ENCODE measurements at regions of chr1 and their contacts with region 1.

Region 1: GRCh38 chr1:93661829-93662474 is 19.7 kb downstream of the BCAR3 start:
- DNase-seq: no peak
- ATAC-seq: no peak
- H3K4me3 Mint-ChIP-seq: no peak overlapping the region
- H3K27ac Mint-ChIP-seq: no peak overlapping the region
- H3K4me1 Mint-ChIP-seq: peaks cover 28% of the 10 kb centered on the region
- H3K27me3 Mint-ChIP-seq: no peaks in the 10 kb centered on the region
- CTCF ChIP-seq: no peak

Region 2: DNA sequence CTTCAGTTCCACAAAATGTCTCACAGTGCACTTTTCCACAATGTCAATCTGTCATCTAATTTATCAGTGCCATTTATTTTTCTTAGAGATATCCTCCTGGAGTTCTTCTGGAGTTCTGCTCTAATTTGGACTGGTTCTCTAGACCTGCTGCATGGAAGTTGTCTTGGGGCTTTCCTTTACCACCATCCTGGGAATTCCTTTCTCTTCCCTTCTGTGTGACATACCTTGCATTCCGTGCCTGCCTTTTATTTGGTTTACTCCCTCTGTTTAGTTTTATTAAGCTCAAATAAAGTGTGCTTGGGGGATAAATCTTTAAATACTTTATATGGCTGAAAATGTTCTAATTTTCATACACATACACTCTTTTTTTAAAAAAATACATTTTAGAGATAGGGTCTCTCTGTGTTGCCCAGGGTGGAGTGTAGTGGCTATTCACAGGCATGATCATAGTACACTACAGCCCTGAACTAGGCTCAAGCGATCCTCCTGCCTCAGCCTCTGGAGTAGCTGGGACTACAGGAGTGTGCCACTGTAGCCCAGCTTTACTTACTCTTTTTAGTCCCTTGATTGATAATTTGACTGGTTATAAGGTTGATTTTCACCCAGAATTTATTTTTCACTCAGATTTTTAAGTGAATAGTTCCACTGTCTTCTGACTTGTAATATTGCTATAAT is 568.5 kb before region 1 on chr1:
- CTCF ChIA-PET with region 1: no interaction called
- POLR2A ChIA-PET with region 1: no interaction called
- intact Hi-C with region 1: no loop called
- DNase-seq: no peak
- ATAC-seq: no peak
- H3K4me3 Mint-ChIP-seq: no peak overlapping the region
- H3K27ac Mint-ChIP-seq: peak overlapping the region; percentile 16
- H3K4me1 Mint-ChIP-seq: peaks cover 60% of the 10 kb centered on the region
- H3K27me3 Mint-ChIP-seq: no peaks in the 10 kb centered on the region
- CTCF ChIP-seq: no peak

Region 3: DNA sequence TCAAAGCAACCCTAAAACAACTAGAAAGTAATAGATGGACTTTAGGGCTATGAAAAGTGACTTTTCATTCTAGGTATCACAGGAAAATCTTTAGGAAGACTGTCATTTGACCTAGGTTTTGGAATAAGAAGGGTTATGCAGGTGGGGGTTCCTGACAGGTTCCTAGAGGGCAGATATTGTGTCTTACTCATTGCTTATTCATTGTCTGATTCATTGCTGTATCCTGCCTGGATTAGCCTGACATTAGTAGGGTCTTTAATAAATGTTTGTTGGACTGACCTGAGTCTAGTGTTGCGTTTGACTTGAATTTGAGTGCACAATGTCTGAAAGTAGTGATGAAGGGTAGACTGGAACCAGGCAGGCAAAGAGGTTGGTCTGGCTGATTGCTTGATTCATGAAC is 208.0 kb before region 1 on chr1:
- CTCF ChIA-PET with region 1: no interaction called
- POLR2A ChIA-PET with region 1: no interaction called
- intact Hi-C with region 1: no loop called
- DNase-seq: no peak
- ATAC-seq: no peak
- H3K4me3 Mint-ChIP-seq: no peak overlapping the region
- H3K27ac Mint-ChIP-seq: no peak overlapping the region
- H3K4me1 Mint-ChIP-seq: peaks cover 15% of the 10 kb centered on the region
- H3K27me3 Mint-ChIP-seq: peaks cover 15% of the 10 kb centered on the region
- CTCF ChIP-seq: no peak

Region 4: DNA sequence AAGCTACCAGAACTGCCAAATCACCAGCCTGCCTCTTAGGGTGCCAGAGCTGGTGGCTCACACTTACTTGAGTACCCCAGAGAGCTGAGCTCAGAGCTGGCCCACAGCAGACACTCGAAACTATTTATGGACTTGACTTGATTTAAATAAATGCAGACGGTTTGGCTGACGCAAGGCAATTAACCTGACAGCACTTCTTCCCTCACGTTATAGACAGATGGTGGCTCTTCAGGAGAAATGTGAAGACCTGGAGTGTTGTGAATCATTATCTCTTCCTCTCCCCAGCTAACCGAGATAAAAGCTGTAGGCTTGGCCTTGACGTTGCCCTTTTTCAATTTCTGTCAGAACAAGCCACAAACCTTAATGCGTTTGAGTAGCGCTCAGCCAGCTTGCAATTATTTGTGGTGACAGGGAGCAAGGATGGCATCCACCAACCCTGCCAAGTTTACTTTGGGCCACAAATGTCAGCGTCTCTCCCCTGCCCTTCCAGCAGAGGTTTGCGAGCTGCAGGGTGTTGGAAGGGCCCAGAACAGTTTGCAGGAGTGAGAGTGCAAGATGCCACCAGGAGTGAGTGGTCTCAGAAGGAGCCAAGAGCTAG is 53.7 kb after region 1 on chr1:
- CTCF ChIA-PET with region 1: no interaction called
- POLR2A ChIA-PET with region 1: interaction called, 11 read pairs
- intact Hi-C with region 1: no loop called
- DNase-seq: no peak
- ATAC-seq: peak; percentile 53
- H3K4me3 Mint-ChIP-seq: no peak overlapping the region
- H3K27ac Mint-ChIP-seq: peak overlapping the region; percentile 61
- H3K4me1 Mint-ChIP-seq: peaks cover 37% of the 10 kb centered on the region
- H3K27me3 Mint-ChIP-seq: no peaks in the 10 kb centered on the region
- CTCF ChIP-seq: no peak